ENCODE measurements at regions of chr10 and their contacts with region 1.

Region 1: GRCh38 chr10:600876-601659 is 88.4 kb downstream of the DIP2C start:
- DNase-seq: no peak
- H3K4me3 ChIP-seq: no peak overlapping the region
- H3K27ac ChIP-seq: peak overlapping the region in 1 of 2 donors; percentile 26
- H3K4me1 ChIP-seq: peaks cover 0 to 4% of the 10 kb centered on the region in 2 donors
- H3K27me3 ChIP-seq: no peaks in the 10 kb centered on the region
- CTCF ChIP-seq: no peak
- POLR2A ChIP-seq: no peak

Region 2: DNA sequence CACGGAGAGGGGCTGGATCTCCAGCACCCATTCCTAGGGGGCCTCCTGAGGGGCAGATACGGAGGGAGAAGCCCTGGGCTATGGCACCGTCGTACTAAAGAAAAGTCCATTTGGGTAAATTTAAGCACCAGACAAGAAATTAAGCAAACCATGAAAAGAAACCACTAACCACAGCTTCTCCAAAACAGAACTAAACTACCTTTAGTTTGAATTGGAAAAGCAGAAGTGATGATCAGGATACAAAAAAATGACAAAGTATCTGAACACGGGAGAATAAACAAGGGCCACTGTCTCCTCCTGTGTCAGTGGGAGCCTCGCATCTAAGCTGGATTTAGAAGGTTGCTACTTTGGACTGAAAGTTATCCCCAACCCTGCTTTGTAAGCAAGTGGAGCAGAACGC is 19.3 kb after region 1 on chr10:
- intact Hi-C with region 1: loop called (anchors 1 kb)
- DNase-seq: no peak
- H3K4me3 ChIP-seq: no peak overlapping the region
- H3K27ac ChIP-seq: no peak overlapping the region
- H3K4me1 ChIP-seq: peaks cover 5 to 6% of the 10 kb centered on the region in 2 donors
- H3K27me3 ChIP-seq: no peaks in the 10 kb centered on the region
- CTCF ChIP-seq: no peak
- POLR2A ChIP-seq: no peak

Region 3: DNA sequence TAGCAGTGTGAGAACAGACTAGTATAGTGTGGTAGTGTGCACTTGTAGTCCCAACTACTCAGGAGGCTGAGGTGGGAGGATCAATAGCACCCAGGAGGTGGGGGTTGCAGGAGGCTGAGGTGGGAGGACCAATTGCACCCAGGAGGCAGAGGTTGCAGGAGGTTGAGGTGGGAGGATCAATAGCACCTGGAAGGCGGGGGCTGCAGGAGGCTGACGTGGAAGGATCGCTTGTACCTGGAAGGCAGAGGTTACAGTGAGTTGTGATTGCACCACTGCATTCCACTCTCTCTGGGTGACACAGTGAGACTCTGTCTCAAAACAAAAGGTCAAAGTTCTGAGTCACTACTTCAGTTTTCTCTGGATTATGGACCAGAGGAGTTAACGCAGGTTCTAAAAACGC is 111.0 kb after region 1 on chr10:
- intact Hi-C with region 1: no loop called
- DNase-seq: no peak
- H3K4me3 ChIP-seq: no peak overlapping the region
- H3K27ac ChIP-seq: no peak overlapping the region
- H3K4me1 ChIP-seq: no peaks in the 10 kb centered on the region
- H3K27me3 ChIP-seq: no peaks in the 10 kb centered on the region
- CTCF ChIP-seq: no peak
- POLR2A ChIP-seq: no peak